Common myeloid progenitor, CD34-positive (primary cell): ENCODE measurements at regions of chr9 and their contacts with region 1.

Region 1: GRCh38 chr9:126500684-126501382 is 112.9 kb upstream of the LMX1B start:
- DNase-seq: peak; percentile 67 to 83 (median 81)
- H3K4me3 ChIP-seq: no peak overlapping the region
- H3K27ac ChIP-seq: no peak overlapping the region
- H3K4me1 ChIP-seq: peaks cover 2 to 49% (median 43%) of the 10 kb centered on the region in 4 experiments
- H3K27me3 ChIP-seq: peaks cover 0 to 15% (median 0%) of the 10 kb centered on the region in 5 experiments

Region 2: GRCh38 chr9:126317513-126317912 is 183.3 kb before region 1 on chr9:
- CTCF ChIA-PET with region 1: interaction called, 19 read pairs
- POLR2A ChIA-PET with region 1: no interaction called
- DNase-seq: peak; percentile 56 to 84 (median 81)
- H3K4me3 ChIP-seq: no peak overlapping the region
- H3K27ac ChIP-seq: no peak overlapping the region
- H3K4me1 ChIP-seq: peaks cover 0 to 4% (median 0%) of the 10 kb centered on the region in 4 experiments
- H3K27me3 ChIP-seq: no peaks in the 10 kb centered on the region

Region 3: GRCh38 chr9:126462617-126463016 is 38.2 kb before region 1 on chr9:
- CTCF ChIA-PET with region 1: interaction called, 13 read pairs
- POLR2A ChIA-PET with region 1: no interaction called
- DNase-seq: no peak
- H3K4me3 ChIP-seq: no peak overlapping the region
- H3K27ac ChIP-seq: no peak overlapping the region
- H3K4me1 ChIP-seq: peaks cover 0 to 11% (median under 1%) of the 10 kb centered on the region in 4 experiments
- H3K27me3 ChIP-seq: no peaks in the 10 kb centered on the region

Region 4: GRCh38 chr9:126514047-126514821 is 13.4 kb after region 1 on chr9:
- CTCF ChIA-PET with region 1: interaction called, 82 read pairs
- POLR2A ChIA-PET with region 1: interaction called, 3 read pairs
- DNase-seq: peak in 2 of 3 donors; percentile 59 to 65
- H3K4me3 ChIP-seq: peak overlapping the region in 3 of 7 experiments; percentile 22 to 64 (median 43)
- H3K27ac ChIP-seq: no peak overlapping the region
- H3K4me1 ChIP-seq: peaks cover 0 to 21% (median 16%) of the 10 kb centered on the region in 4 experiments
- H3K27me3 ChIP-seq: peaks cover 2 to 30% (median 16%) of the 10 kb centered on the region in 5 experiments

Region 5: DNA sequence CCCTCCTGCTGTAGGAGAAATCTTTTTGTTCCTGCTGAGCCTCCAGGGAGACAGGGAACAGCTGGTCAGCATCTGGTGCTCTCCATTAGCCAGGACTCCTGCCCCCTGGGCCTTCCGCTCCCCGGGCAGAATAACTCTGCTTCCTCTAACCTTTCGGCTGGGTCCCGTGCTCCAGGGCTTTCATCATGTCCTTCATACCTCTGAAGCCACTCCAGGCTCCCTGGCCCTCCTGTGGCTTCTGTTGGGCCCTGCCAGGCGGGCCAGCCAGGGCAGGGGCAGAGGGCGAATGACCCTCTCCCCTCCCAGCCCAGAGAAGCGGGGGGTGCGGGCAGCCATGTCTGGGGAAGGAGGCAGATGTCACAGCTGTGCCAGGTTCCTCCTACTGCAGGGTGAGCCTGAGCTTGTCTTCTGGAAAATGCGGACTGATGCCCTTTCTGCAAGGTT is 31.2 kb after region 1 on chr9:
- CTCF ChIA-PET with region 1: interaction called, 15 read pairs
- POLR2A ChIA-PET with region 1: interaction called, 3 read pairs
- DNase-seq: no peak
- H3K4me3 ChIP-seq: no peak overlapping the region
- H3K27ac ChIP-seq: no peak overlapping the region
- H3K4me1 ChIP-seq: peaks cover 4 to 17% (median 15%) of the 10 kb centered on the region in 4 experiments
- H3K27me3 ChIP-seq: no peaks in the 10 kb centered on the region

Region 6: GRCh38 chr9:126558051-126558665 is 57.3 kb after region 1 on chr9:
- CTCF ChIA-PET with region 1: interaction called, 118 read pairs
- POLR2A ChIA-PET with region 1: interaction called, 8 read pairs
- DNase-seq: peak; percentile 38 to 72 (median 63)
- H3K4me3 ChIP-seq: no peak overlapping the region
- H3K27ac ChIP-seq: no peak overlapping the region
- H3K4me1 ChIP-seq: peaks cover 0 to 4% (median 2%) of the 10 kb centered on the region in 4 experiments
- H3K27me3 ChIP-seq: peaks cover 0 to 21% (median 4%) of the 10 kb centered on the region in 5 experiments